Activated B cell treated with CpG ODN at 0.5 μM for 24 hours (primary cell): ENCODE measurements at regions of chr7 and their contacts with region 1.

Region 1: DNA sequence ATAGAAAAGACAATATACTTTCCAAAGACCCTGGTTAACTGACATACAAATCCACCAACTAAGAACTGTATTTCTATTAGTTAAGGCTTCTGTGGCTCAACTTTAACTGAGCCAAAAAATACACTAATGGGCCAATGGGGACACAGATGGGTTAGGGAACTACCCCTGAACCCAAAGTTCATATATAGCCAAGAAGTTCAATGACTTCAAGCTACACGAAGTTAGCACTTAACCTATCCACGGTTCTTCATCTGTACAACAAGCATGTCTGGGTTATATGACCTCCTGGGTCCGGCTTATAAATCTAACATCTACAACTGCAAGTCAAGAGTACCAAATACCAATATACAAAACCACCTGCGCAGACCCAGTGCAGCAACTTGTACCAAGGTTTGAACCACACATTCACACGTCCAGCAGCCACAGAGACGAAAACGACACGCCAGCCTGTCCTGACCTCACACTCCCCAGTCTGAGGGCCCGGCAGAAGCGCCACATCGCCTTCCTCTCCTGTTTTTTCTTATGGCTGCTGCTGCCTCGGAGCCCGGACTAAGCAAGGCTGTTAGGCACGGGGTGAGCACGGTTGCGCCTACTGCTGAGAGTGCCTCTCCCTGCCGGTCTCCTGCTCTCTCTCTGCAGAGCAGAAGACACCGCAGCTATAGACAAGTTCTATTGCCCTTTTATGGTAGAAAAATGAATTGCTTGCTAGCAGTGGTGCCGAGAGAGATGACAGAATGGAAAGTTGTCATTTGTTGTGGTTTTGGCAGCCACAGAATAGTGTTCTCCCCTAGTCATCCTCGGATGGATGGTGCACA is 86.3 kb downstream of the RNF216 start:
- DNase-seq: no peak
- ATAC-seq: peak; percentile 48
- H3K4me3 Mint-ChIP-seq: peak overlapping the region; percentile 87
- H3K27ac Mint-ChIP-seq: peak overlapping the region; percentile 91
- H3K4me1 Mint-ChIP-seq: peaks cover 100% of the 10 kb centered on the region
- H3K27me3 Mint-ChIP-seq: no peaks in the 10 kb centered on the region
- CTCF ChIP-seq: no peak

Region 2: GRCh38 chr7:5396999-5397663 is 298.0 kb before region 1 on chr7:
- CTCF ChIA-PET with region 1: no interaction called
- POLR2A ChIA-PET with region 1: interaction called, 16 read pairs
- intact Hi-C with region 1: loop called (anchors 1 kb)
- DNase-seq: peak; percentile 80
- ATAC-seq: peak; percentile 94
- H3K4me3 Mint-ChIP-seq: peak overlapping the region; percentile 86
- H3K27ac Mint-ChIP-seq: peak overlapping the region; percentile 89
- H3K4me1 Mint-ChIP-seq: peaks cover 30% of the 10 kb centered on the region
- H3K27me3 Mint-ChIP-seq: no peaks in the 10 kb centered on the region
- CTCF ChIP-seq: no peak

Region 3: DNA sequence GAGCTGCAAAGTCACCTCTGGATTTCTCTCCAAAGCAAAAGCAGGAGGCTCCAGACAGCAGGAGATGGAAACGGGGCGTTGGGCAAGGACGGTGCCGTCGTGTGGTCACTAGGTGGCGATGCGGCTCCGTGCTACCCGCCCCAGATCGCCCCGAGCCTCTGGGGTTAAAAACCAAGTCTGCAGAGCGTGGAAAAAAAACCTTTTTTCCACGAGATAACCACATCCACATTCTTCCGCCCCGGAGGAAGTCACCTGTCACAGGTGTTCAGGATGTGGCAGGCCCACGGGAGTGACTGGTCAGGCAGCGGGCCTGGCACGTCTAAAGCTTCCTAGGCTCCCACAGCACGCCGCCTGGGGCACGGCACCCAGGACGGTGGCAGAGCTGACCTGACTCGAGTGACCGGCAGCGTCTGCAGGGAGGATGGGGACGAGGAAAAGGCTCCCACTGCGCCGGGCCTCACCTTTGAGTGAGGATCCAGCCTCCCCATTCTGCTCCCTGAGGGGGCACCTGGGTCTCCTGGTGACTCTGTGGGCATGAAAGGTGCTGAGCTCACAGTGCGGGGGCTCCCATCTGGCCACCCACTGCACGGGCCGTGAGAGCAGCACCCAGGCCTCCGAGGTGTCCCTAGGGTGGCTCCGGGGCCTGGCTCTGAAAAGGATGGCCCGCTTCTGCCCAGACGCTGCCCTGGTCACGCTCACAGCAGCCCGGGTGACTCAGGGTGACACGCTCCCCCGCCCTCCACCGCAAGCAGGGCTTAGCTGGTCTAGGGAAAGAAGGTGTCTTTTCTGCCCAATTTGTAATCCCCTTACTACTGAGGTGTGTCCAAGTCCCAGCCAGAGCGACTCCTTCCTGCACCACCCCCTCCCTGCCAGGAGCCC is 200.2 kb before region 1 on chr7:
- CTCF ChIA-PET with region 1: interaction called, 80 read pairs
- POLR2A ChIA-PET with region 1: interaction called, 8 read pairs
- intact Hi-C with region 1: no loop called
- DNase-seq: peak; percentile 71
- ATAC-seq: peak; percentile 82
- H3K4me3 Mint-ChIP-seq: peak overlapping the region; percentile 71
- H3K27ac Mint-ChIP-seq: no peak overlapping the region
- H3K4me1 Mint-ChIP-seq: peaks cover 21% of the 10 kb centered on the region
- H3K27me3 Mint-ChIP-seq: no peaks in the 10 kb centered on the region
- CTCF ChIP-seq: peak; percentile 42

Region 4: GRCh38 chr7:5526100-5526905 is 168.8 kb before region 1 on chr7:
- CTCF ChIA-PET with region 1: interaction called, 3 read pairs
- POLR2A ChIA-PET with region 1: interaction called, 28 read pairs
- intact Hi-C with region 1: no loop called
- DNase-seq: peak; percentile 33
- ATAC-seq: no peak
- H3K4me3 Mint-ChIP-seq: peak overlapping the region; percentile 95
- H3K27ac Mint-ChIP-seq: peak overlapping the region; percentile 80
- H3K4me1 Mint-ChIP-seq: peaks cover 46% of the 10 kb centered on the region
- H3K27me3 Mint-ChIP-seq: no peaks in the 10 kb centered on the region
- CTCF ChIP-seq: no peak

Region 5: GRCh38 chr7:5665094-5666025 is 29.8 kb before region 1 on chr7:
- CTCF ChIA-PET with region 1: interaction called, 27 read pairs
- POLR2A ChIA-PET with region 1: interaction called, 6 read pairs
- intact Hi-C with region 1: no loop called
- DNase-seq: no peak
- ATAC-seq: peak; percentile 71
- H3K4me3 Mint-ChIP-seq: no peak overlapping the region
- H3K27ac Mint-ChIP-seq: no peak overlapping the region
- H3K4me1 Mint-ChIP-seq: peaks cover 28% of the 10 kb centered on the region
- H3K27me3 Mint-ChIP-seq: no peaks in the 10 kb centered on the region
- CTCF ChIP-seq: no peak